Caco-2 (cell line): ENCODE measurements at regions of chr1 and their contacts with region 1.

Region 1: DNA sequence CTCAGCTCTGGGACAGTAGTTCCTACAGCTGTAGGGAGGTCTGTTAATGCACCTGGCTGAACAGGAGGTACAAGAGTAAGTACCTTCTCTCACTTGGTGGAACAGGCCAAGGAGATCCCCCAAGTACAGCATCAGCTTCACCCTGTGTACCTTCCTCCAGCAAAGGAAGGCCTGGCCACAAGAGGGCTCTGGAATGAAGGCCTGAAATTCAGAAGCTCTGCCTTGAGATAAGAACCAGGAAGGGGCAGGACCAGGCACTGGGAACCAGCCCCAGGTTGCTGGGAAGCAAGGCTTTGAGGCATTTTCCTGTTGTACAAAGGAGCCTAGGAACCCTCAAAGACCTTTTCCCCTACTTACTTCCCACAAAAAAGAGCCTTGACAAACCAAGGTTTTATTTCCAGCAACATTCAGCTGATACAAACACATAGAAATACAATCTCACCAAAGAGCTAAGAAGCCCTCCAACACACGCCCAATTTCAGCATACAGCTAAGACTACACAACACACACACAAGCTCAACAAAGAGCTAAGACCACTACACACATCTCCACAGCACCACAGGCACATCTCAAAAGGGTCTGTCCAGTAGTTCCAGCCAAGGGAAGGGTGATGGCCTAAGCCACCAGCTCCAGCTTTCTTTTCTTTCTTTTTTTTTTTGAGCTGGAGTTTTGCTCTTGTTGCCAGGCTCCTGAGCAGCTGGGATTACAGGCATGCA is 23.5 kb downstream of the F11R start:
- DNase-seq: peak; percentile 81 to 83
- H3K4me3 ChIP-seq: no peak overlapping the region
- H3K4me3 Mint-ChIP-seq: no peak overlapping the region
- H3K27ac Mint-ChIP-seq: peak overlapping the region; percentile 36
- H3K4me1 ChIP-seq: peaks cover 10% of the 10 kb centered on the region
- H3K4me1 Mint-ChIP-seq: peaks cover 7% of the 10 kb centered on the region
- H3K27me3 ChIP-seq: no peaks in the 10 kb centered on the region
- H3K27me3 Mint-ChIP-seq: no peaks in the 10 kb centered on the region
- CTCF ChIP-seq: peak; percentile 53 to 86

Region 2: GRCh38 chr1:161013488-161014230 is 16.2 kb after region 1 on chr1:
- CTCF ChIA-PET with region 1: interaction called, 9 read pairs
- POLR2A ChIA-PET with region 1: interaction called, 8 read pairs
- intact Hi-C with region 1: loop called (anchors 1 kb)
- DNase-seq: peak; percentile 95 to 97
- H3K4me3 ChIP-seq: peak overlapping the region; percentile 11; the same call in 1 of the 2 replicates
- H3K4me3 Mint-ChIP-seq: peak overlapping the region; percentile 72
- H3K27ac Mint-ChIP-seq: peak overlapping the region; percentile 97
- H3K4me1 ChIP-seq: peaks cover 64% of the 10 kb centered on the region
- H3K4me1 Mint-ChIP-seq: peaks cover 42% of the 10 kb centered on the region
- H3K27me3 ChIP-seq: no peaks in the 10 kb centered on the region
- H3K27me3 Mint-ChIP-seq: no peaks in the 10 kb centered on the region
- CTCF ChIP-seq: no peak

Region 3: GRCh38 chr1:161038523-161039153 is 41.2 kb after region 1 on chr1 and contains the start of gene TSTD1:
- CTCF ChIA-PET with region 1: interaction called, 14 read pairs
- POLR2A ChIA-PET with region 1: interaction called, 4 read pairs
- intact Hi-C with region 1: loop called (anchors 1 kb)
- DNase-seq: peak; percentile 78 to 80
- H3K4me3 ChIP-seq: peak within 1 kb of the TSS; percentile 72
- H3K4me3 Mint-ChIP-seq: peak within 1 kb of the TSS; percentile 94
- H3K27ac Mint-ChIP-seq: peak within 1 kb of the TSS; percentile 87
- H3K4me1 ChIP-seq: peaks cover 7% of the 10 kb centered on the region; the same call in 1 of the 2 replicates
- H3K4me1 Mint-ChIP-seq: no peaks in the 10 kb centered on the region
- H3K27me3 ChIP-seq: no peaks in the 10 kb centered on the region
- H3K27me3 Mint-ChIP-seq: no peaks in the 10 kb centered on the region
- CTCF ChIP-seq: no peak
- total RNA-seq, gene TSTD1: 24.8 and 26.8 TPM in 2 replicates

Region 4: GRCh38 chr1:161071886-161072371 is 74.4 kb after region 1 on chr1:
- CTCF ChIA-PET with region 1: interaction called, 8 read pairs
- POLR2A ChIA-PET with region 1: no interaction called
- intact Hi-C with region 1: loop called (anchors 1 kb)
- DNase-seq: peak; percentile 78
- H3K4me3 ChIP-seq: no peak overlapping the region
- H3K4me3 Mint-ChIP-seq: no peak overlapping the region
- H3K27ac Mint-ChIP-seq: no peak overlapping the region
- H3K4me1 ChIP-seq: no peaks in the 10 kb centered on the region
- H3K4me1 Mint-ChIP-seq: peaks cover 9% of the 10 kb centered on the region
- H3K27me3 ChIP-seq: no peaks in the 10 kb centered on the region
- H3K27me3 Mint-ChIP-seq: no peaks in the 10 kb centered on the region
- CTCF ChIP-seq: peak; percentile 74 to 82

Region 5: DNA sequence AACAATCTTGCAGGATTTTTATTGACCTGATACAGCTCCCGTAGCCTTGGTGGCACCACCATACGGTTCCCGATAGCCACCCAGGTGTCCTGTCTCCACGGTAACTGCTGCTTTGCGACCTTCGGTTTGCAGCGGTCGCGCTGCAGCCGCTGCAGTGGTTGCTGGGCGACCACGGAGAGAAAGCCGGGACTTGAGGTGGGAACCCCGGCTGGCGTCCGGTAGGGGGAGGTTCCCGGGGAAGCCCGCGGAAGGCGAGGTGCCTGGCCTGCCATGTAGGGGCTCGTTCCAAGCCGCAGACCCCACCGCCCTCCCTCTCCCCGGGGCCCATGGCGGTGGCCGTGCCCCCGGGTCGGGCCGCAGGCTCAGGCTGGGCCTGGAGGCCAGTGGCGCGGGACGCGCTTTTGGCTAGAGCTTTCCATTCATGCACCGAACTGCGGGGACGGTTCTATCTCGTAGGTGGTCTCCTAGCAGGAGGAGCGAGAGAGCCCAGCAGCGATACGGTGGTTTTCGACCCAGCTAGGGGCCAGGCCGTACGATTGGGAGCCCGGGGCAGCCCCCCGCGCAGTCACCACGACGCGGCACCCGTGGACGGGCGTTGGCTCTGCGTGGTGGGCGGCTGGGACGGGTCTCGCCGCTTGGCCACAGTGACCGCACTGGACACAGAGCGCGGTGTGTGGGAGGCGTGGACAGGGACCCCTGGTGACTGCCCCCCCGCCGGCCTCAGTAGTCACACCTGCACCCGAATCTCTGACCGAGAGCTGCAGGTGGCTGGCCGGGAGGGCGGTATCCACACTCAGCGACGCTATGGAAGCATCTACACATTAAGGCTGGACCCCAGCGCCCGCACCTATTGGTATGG is 101.0 kb after region 1 on chr1 and contains the start of gene KLHDC9:
- CTCF ChIA-PET with region 1: interaction called, 20 read pairs
- POLR2A ChIA-PET with region 1: no interaction called
- intact Hi-C with region 1: loop called (anchors 1 kb)
- DNase-seq: peak; percentile 88 to 92
- H3K4me3 ChIP-seq: peak within 1 kb of the TSS; percentile 60
- H3K4me3 Mint-ChIP-seq: peak within 1 kb of the TSS; percentile 70
- H3K27ac Mint-ChIP-seq: peak within 1 kb of the TSS; percentile 82
- H3K4me1 ChIP-seq: no peaks in the 10 kb centered on the region
- H3K4me1 Mint-ChIP-seq: peaks cover 16% of the 10 kb centered on the region
- H3K27me3 ChIP-seq: no peaks in the 10 kb centered on the region
- H3K27me3 Mint-ChIP-seq: no peaks in the 10 kb centered on the region
- CTCF ChIP-seq: peak in 1 of 2 experiments; percentile 26
- total RNA-seq, gene KLHDC9: 2.0 and 2.2 TPM in 2 replicates

Region 6: DNA sequence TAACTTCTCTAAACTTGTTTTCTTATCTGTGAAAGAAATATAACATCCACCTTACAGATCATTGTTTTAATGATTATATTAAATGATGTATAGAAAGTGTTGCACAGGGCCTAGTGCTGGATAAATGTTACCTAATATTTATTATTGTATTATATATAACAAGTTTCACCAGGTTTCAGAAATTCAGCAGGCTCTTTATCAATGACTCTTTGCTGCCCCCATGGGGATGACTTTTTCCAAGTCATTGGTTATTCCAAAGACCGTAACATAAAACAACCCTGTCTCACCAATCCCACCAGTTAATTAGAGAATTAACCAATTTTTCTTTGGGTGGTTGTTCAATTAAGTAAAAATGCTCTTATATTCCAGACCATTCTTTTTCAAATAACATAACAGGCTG is 142.3 kb after region 1 on chr1:
- CTCF ChIA-PET with region 1: interaction called, 8 read pairs
- POLR2A ChIA-PET with region 1: no interaction called
- intact Hi-C with region 1: loop called (anchors 1 kb)
- DNase-seq: peak in 1 of 2 experiments; percentile 71
- H3K4me3 ChIP-seq: no peak overlapping the region
- H3K4me3 Mint-ChIP-seq: no peak overlapping the region
- H3K27ac Mint-ChIP-seq: no peak overlapping the region
- H3K4me1 ChIP-seq: no peaks in the 10 kb centered on the region
- H3K4me1 Mint-ChIP-seq: peaks cover 17% of the 10 kb centered on the region
- H3K27me3 ChIP-seq: no peaks in the 10 kb centered on the region
- H3K27me3 Mint-ChIP-seq: no peaks in the 10 kb centered on the region
- CTCF ChIP-seq: peak; percentile 52 to 54